Panc1 (cell line): ENCODE measurements at regions of chr13 and their contacts with region 1.

Region 1: GRCh38 chr13:112942689-112943308 is 26.2 kb upstream of the MCF2L start:
- DNase-seq: peak; percentile 78
- ATAC-seq: peak; percentile 95
- H3K4me3 ChIP-seq: peak overlapping the region; percentile 46 to 50
- H3K27ac ChIP-seq: no peak overlapping the region
- H3K4me1 ChIP-seq: no peaks in the 10 kb centered on the region
- H3K27me3 ChIP-seq: no peaks in the 10 kb centered on the region
- CTCF ChIP-seq: peak; percentile 81

Region 2: DNA sequence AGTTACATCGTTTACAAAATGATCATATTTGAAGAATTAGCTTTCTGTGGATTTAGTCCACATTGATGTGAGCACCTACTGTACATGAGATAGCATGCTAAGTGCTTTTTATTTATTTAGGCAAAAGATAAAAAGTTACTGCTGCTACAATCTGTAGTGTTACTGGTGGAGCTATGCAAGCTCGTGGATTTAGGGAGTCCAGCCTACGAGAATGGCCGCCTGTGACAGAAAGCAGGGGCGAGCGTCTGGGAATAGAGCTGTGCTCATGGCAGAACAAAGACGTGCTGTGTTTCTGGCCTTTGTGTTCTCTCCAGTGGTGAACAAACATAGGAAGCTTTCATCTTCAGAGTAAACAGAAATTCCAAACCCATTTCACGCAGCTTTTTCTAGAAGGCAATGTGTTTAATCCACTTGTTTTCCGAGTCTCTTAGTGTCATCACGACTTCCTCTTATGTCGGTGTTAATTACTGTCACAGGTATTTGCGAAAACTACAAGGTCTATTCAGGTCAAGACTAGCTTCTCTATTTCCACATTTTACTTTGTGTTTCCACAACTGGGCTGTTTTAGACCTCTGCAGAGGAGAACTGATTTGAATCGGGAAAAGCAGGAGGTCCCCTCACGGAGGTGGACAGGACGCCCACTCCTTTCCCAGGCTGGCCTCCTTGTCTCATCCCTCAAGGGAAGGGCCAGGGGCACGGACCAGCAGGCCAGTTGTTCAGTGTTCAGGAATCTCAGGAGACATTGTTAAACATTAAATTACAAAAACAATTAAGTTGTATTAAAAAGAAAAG is 185.6 kb before region 1 on chr13:
- CTCF ChIA-PET with region 1: no interaction called
- POLR2A ChIA-PET with region 1: no interaction called
- in situ Hi-C with region 1: no loop called
- intact Hi-C with region 1: no loop called
- DNase-seq: no peak
- ATAC-seq: no peak
- H3K4me3 ChIP-seq: no peak overlapping the region
- H3K27ac ChIP-seq: peak overlapping the region; percentile 29; the same call in 1 of the 2 replicates
- H3K4me1 ChIP-seq: peaks cover 28% of the 10 kb centered on the region
- H3K27me3 ChIP-seq: no peaks in the 10 kb centered on the region
- CTCF ChIP-seq: no peak

Region 3: GRCh38 chr13:113029487-113030258 is 86.9 kb after region 1 on chr13:
- CTCF ChIA-PET with region 1: interaction called, 5 read pairs
- POLR2A ChIA-PET with region 1: no interaction called
- in situ Hi-C with region 1: no loop called
- intact Hi-C with region 1: loop called (anchors 2 kb)
- DNase-seq: no peak
- ATAC-seq: peak; percentile 61; the same call in 1 of the 2 replicates
- H3K4me3 ChIP-seq: no peak overlapping the region
- H3K27ac ChIP-seq: no peak overlapping the region
- H3K4me1 ChIP-seq: no peaks in the 10 kb centered on the region
- H3K27me3 ChIP-seq: peaks cover 6% of the 10 kb centered on the region; the same call in 1 of the 2 replicates
- CTCF ChIP-seq: peak; percentile 84

Region 4: DNA sequence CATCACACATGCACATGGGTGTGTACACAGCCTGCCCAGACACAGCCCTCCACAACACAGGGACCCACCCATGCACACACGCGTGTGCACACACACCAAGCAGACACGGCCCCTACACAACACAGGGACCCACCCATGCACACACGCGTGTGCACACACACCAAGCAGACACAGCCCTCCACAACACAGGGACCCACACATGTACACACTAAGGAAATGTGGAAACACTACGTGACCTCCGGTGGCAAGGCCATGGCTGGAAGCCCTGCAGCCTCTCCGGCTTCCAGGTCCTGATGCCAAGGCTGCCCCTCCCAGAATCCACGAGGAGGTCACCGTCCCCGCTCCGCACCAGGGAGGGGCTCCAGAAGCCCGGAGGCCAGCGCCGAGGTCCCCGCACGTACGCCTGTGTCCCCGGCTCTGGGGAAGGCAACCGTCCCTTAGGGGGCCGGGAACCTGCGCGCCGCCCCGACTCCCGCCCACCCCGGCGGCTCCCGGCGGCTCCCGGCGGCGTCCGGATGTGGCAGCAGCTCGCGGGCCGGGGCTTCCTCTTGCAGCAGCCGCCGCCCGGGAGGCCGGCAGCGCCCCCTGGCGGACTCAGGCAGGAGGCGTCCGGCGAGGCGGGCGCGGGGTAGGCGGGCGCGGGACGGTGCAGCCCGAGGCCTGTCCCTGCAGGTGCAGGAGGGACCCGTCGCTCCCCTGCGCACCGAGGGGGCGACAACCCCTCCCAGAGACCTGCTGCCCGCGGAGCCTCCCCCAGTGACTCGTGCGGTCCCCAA is 451.0 kb after region 1 on chr13:
- CTCF ChIA-PET with region 1: no interaction called
- POLR2A ChIA-PET with region 1: no interaction called
- in situ Hi-C with region 1: no loop called
- intact Hi-C with region 1: loop called (anchors 10 kb)
- DNase-seq: no peak
- ATAC-seq: peak; percentile 98
- H3K4me3 ChIP-seq: peak overlapping the region; percentile 56 to 69
- H3K27ac ChIP-seq: peak overlapping the region; percentile 57
- H3K4me1 ChIP-seq: no peaks in the 10 kb centered on the region; the same call in 1 of the 2 replicates
- H3K27me3 ChIP-seq: no peaks in the 10 kb centered on the region
- CTCF ChIP-seq: peak; percentile 88